ENCODE measurements at regions of chr17 and their contacts with region 1.

Region 1: DNA sequence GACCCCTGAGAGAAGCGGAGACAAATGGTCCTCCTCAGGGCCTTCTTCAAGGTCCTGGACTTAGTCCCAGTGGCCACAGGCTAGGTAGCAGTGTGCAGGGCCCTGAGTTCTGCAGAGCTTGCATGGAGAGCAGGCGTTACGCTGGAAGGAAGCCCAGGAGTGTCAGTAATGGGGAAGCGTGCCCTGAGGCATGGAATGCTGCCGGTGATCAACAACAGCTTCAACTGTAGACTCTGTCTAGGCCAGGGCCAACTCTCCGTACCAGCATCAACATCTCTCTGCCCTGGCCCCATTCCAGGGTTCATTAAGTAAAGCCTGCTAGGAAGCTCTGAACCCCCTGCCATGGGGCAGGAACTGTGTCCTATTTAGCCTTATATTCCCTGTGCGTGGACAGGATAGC is 568 bp upstream of the TNK1 start:
- DNase-seq: no peak
- ATAC-seq: peak; percentile 77
- H3K4me3 ChIP-seq: peak overlapping the region; percentile 62 to 83 (median 77)
- H3K27ac ChIP-seq: no peak overlapping the region
- H3K4me1 ChIP-seq: peaks cover 21% of the 10 kb centered on the region
- H3K27me3 ChIP-seq: peaks cover 0 to 7% of the 10 kb centered on the region in 2 experiments; a peak in 1 of 5 replicates
- CTCF ChIP-seq: peak; percentile 36
- EP300 ChIP-seq: no peak
- POLR2A ChIP-seq: no peak
- RAD21 ChIP-seq: no peak

Region 2: DNA sequence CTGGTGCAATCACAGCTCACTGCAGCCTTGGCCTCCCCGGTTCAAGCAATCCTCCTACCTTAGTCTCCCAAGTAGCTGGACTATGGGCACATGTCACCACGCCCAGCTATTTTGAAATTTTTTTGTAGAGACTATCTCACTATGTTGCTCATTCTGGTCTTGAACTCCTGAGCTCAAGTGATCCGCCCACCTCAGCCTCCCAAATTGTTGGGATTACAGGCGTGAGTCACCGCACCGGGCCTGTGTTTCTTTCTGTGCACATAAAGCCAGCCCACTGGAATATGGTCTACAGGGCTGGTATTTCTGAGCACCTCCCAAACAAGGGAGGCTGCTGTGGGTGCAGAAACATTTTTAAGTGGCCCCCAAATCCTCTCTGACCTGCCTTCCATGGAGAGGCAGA is 17.0 kb before region 1 on chr17:
- CTCF ChIA-PET with region 1: no interaction called
- POLR2A ChIA-PET with region 1: no interaction called
- in situ Hi-C with region 1: no loop called
- intact Hi-C with region 1: no loop called
- DNase-seq: peak; percentile 69
- ATAC-seq: peak; percentile 83
- H3K4me3 ChIP-seq: no peak overlapping the region
- H3K27ac ChIP-seq: no peak overlapping the region
- H3K4me1 ChIP-seq: peaks cover 14% of the 10 kb centered on the region
- H3K27me3 ChIP-seq: peaks cover 0 to 8% of the 10 kb centered on the region in 2 experiments; a peak in 2 of 5 replicates
- CTCF ChIP-seq: no peak
- EP300 ChIP-seq: no peak; a peak in 1 of 4 replicates
- POLR2A ChIP-seq: no peak
- RAD21 ChIP-seq: no peak

Region 3: GRCh38 chr17:7394452-7395191 is 14.3 kb after region 1 on chr17 and contains the start of gene PLSCR3:
- CTCF ChIA-PET with region 1: no interaction called
- POLR2A ChIA-PET with region 1: interaction called, 13 read pairs
- in situ Hi-C with region 1: no loop called
- intact Hi-C with region 1: no loop called
- DNase-seq: peak; percentile 75
- ATAC-seq: peak; percentile 91
- H3K4me3 ChIP-seq: peak within 1 kb of the TSS; percentile 68 to 90 (median 84)
- H3K27ac ChIP-seq: peak within 1 kb of the TSS; percentile 76
- H3K4me1 ChIP-seq: peaks cover 14% of the 10 kb centered on the region
- H3K27me3 ChIP-seq: no peaks in the 10 kb centered on the region
- CTCF ChIP-seq: peak; percentile 53
- EP300 ChIP-seq: no peak
- POLR2A ChIP-seq: peak; percentile 59 to 84; a peak in 3 of 4 replicates
- RAD21 ChIP-seq: peak; percentile 43; the same call in 1 of the 2 replicates
- total RNA-seq, gene PLSCR3: 5.6 and 6.0 TPM in 2 replicates

Region 4: DNA sequence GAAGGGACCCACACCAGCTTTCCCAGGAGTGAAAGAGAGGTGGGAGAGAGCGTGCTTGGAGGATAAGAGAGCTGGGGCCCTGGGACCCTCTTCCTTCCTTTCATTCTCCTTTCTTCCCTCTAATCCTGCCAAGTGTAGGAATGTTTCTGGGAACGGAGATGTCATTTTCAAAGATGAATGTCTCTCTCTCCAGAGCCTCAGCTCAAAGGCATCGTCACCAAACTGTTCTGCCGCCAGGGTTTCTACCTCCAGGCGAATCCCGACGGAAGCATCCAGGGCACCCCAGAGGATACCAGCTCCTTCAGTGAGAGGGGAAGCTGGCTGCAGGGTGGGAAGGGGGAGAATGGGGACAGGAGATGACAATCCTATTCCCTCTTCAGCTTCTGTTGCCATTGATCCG is 61.0 kb after region 1 on chr17:
- CTCF ChIA-PET with region 1: no interaction called
- POLR2A ChIA-PET with region 1: no interaction called
- in situ Hi-C with region 1: no loop called
- intact Hi-C with region 1: no loop called
- DNase-seq: no peak
- ATAC-seq: no peak
- H3K4me3 ChIP-seq: peak overlapping the region in 1 of 3 experiments; percentile 80; a peak in 2 of 6 replicates
- H3K27ac ChIP-seq: no peak overlapping the region
- H3K4me1 ChIP-seq: peaks cover 60% of the 10 kb centered on the region
- H3K27me3 ChIP-seq: peaks cover 6 to 27% of the 10 kb centered on the region in 2 experiments; a peak in 4 of 5 replicates
- CTCF ChIP-seq: no peak
- EP300 ChIP-seq: no peak
- POLR2A ChIP-seq: no peak
- RAD21 ChIP-seq: no peak

Region 5: DNA sequence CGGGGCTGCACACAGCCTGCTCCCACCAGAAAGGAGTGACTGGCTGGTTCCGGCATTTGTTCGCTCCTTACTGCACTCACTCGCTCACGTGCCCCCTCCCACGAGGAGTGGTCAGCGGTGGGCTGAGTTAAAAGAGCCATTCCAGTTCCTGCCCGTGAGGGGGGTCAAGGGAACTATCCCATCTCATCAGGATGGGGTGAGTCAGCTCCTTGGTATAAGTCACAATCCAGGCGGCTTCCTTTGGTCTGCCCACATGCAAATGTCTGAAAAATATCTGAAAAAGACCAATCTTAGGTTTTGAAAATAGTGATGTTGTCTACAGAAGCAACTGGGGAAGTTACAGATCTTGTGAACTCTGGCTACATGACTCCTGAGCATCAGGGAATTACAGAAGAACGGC is 158.6 kb after region 1 on chr17:
- CTCF ChIA-PET with region 1: no interaction called
- POLR2A ChIA-PET with region 1: no interaction called
- in situ Hi-C with region 1: no loop called
- intact Hi-C with region 1: no loop called
- DNase-seq: no peak
- ATAC-seq: no peak
- H3K4me3 ChIP-seq: no peak overlapping the region
- H3K27ac ChIP-seq: no peak overlapping the region
- H3K4me1 ChIP-seq: peaks cover 49% of the 10 kb centered on the region
- H3K27me3 ChIP-seq: peaks cover 0 to 7% of the 10 kb centered on the region in 2 experiments; a peak in 3 of 5 replicates
- CTCF ChIP-seq: no peak
- EP300 ChIP-seq: no peak
- POLR2A ChIP-seq: no peak
- RAD21 ChIP-seq: no peak

Measured in HepG2 (cell line).